ENCODE measurements at regions of chr7 and their contacts with region 1.

Region 1: DNA sequence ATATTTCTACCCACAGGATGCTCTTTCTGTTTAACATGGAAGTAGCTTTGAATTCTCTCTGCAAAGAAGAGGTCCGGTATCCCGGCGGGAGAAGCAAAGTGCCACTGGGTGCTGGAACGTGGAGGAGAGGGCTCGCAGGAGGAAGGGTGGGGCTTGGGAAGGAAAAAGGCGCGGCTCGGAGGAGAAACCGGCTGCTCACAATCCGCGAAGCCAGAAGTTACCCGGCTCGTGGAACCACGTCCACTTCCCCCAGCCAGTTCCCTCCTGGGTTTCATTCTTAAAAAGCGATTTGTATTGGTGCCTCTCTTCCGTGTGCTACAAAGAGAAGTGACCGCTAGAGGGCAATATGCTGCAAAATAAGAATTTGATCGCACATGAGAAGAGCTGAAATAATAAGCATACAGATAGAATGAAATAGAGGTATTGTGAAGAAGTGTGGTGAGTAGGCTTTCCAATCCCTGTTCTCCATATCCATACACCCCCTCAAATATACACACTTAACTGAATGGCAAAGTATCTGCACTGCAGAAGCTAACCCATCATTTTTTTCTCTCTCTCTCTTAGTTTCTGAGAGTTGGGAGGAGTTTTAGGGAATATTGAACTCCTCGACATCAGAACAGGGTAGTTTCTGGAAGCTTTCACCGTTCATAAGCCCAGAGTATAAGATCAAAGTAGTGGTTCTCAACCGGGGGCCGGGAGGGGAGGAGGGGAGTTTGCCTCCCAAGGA is 31.1 kb downstream of the TRIL start:
- DNase-seq: peak; percentile 39
- H3K4me3 ChIP-seq: peak overlapping the region; percentile 58
- H3K27me3 ChIP-seq: peaks cover 6% of the 10 kb centered on the region
- CTCF ChIP-seq: peak; percentile 78

Region 2: DNA sequence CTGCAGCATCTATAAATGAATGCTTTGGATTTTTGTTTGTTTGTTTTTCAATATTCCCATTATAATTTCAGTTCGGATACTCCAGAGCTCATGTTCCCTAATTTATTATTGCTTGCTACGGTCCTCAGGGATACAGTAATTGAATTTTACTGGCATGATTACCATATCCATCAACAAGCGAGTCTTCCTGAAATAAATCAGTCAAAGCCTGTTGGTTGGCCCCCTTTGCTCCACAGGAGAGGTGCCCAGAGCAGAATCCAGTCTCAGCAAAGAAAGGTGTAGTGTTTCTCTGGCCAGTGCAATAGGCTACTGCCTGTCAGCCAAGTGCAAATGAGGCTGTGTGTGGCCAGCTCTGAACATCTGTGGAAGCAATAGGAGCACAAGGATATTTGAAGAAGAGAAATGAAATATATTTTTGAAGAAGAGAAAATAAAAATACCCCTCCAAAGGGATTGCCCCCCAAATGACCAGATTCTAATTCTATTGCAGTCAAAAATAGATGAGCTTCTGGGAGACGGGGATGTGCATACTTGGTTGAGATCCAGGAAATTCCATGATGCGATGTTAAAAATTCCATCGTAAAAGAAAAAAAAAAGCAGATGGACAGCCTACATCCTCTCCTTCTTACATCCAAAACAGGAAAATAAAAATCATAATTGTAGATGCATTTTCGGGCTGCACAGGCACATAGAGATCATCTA is 13.0 kb after region 1 on chr7:
- CTCF ChIA-PET with region 1: interaction called, 50 read pairs
- POLR2A ChIA-PET with region 1: no interaction called
- DNase-seq: no peak
- H3K4me3 ChIP-seq: no peak overlapping the region
- H3K27me3 ChIP-seq: peaks cover 5% of the 10 kb centered on the region
- CTCF ChIP-seq: no peak

Region 3: DNA sequence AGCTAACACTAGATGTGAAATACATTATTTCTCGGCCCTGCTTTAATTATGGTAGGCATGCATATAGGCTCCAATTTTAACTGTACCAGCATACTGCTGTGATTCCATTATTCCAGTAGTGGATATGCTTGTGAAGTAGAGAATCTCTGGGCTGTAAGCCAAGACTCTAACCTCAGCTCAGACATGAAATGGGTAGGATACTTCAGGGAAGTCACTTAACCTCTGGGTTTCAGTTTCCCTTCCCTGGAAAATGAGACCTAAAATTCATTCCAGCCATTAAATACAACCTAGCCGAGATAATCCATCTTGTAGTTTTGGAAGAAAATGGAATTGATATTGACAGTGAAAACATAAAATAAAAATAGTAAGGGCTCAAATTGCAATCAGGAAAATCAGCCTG is 90.7 kb after region 1 on chr7:
- CTCF ChIA-PET with region 1: interaction called, 41 read pairs
- POLR2A ChIA-PET with region 1: no interaction called
- DNase-seq: no peak
- H3K4me3 ChIP-seq: no peak overlapping the region
- H3K27me3 ChIP-seq: no peaks in the 10 kb centered on the region; the same call in 1 of the 2 replicates
- CTCF ChIP-seq: no peak

Region 4: GRCh38 chr7:29078311-29079260 is 151.6 kb after region 1 on chr7:
- CTCF ChIA-PET with region 1: interaction called, 13 read pairs
- POLR2A ChIA-PET with region 1: interaction called, 11 read pairs
- DNase-seq: no peak
- H3K4me3 ChIP-seq: no peak overlapping the region
- H3K27me3 ChIP-seq: peaks cover 2% of the 10 kb centered on the region; the same call in 1 of the 2 replicates
- CTCF ChIP-seq: no peak

Region 5: GRCh38 chr7:29105752-29106668 is 179.0 kb after region 1 on chr7:
- CTCF ChIA-PET with region 1: interaction called, 555 read pairs
- POLR2A ChIA-PET with region 1: no interaction called
- DNase-seq: no peak
- H3K4me3 ChIP-seq: no peak overlapping the region
- H3K27me3 ChIP-seq: peaks cover 2% of the 10 kb centered on the region
- CTCF ChIP-seq: peak; percentile 85

Measured in BJ (cell line).